Testis (tissue), 5 donors: ENCODE measurements at regions of chr18 and their contacts with region 1.

Region 1: DNA sequence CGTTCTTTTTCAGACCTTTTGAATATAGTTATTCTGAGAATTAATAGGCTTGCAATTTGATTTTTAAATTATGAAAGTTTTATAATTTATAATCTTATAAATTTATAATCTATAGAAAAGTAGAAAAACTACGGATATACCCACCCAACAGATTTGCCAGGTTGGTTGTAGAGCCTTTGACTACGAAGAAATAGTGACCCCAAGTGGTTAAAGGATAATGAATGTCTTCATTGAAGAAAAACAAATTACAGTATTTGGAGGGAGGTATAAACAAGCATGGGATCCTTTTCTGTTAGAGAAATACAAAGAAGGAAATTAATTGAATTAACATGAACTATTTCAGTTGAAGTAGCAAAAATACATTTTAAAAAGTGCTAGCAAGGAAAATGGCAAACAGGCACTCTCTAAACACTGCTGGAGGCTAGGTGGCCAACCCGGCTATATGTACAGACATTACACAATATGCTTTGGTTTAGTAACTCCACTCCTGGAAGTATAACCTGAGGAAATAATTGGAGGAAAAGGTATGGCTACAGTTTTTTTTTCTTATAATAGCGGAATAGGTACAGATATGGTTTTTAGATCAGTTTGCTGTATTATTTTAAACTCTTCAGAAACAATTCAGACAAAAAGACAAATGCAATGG is 110.9 kb downstream of the MIB1 start:
- DNase-seq: no peak
- H3K4me3 ChIP-seq: no peak overlapping the region
- H3K27ac ChIP-seq: no peak overlapping the region
- H3K4me1 ChIP-seq: no peaks in the 10 kb centered on the region
- H3K27me3 ChIP-seq: no peaks in the 10 kb centered on the region
- CTCF ChIP-seq: peak in 1 of 3 experiments; percentile 29
- POLR2A ChIP-seq: no peak

Region 2: GRCh38 chr18:21489919-21490495 is 361.4 kb before region 1 on chr18:
- intact Hi-C with region 1: loop called (anchors 10 kb)
- DNase-seq: no peak
- H3K4me3 ChIP-seq: no peak overlapping the region
- H3K27ac ChIP-seq: no peak overlapping the region
- H3K4me1 ChIP-seq: no peaks in the 10 kb centered on the region
- H3K27me3 ChIP-seq: no peaks in the 10 kb centered on the region
- CTCF ChIP-seq: no peak
- POLR2A ChIP-seq: no peak

Region 3: DNA sequence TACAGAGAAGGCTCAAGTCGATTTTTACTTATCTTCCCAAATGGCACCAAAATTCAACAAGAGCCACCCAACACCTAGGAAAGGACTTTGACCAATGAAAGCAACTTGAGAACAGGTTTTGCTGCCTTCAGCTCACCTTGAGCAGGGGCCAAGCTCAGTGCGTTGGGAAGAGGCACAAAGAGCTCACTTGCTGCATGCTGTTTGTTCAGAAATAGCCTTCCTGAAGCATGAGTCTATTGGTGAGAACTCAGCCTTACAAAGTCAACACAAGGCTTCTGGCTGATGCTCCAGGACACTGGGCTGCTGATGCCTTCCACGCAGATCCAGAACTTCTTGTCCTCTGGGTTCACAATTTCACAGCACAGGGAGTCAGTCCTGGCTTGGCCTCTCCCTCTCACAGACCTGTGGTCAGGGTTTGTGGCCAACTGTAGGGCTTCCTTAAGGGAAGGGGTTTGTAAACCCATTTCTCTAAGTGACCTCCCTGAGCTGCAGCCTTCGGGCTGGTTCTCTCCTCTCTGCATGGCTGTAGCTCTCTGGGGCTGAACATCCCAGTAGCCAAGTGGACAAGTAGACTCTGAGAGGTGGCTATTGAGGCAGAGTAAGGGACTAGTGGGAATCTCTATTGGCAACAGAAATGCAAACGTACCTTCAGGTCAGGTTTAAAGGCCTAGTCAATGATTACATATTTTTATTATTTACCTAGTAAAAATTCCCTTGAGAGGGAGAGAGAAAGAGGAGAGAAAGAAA is 193.2 kb after region 1 on chr18:
- intact Hi-C with region 1: no loop called
- DNase-seq: no peak
- H3K4me3 ChIP-seq: no peak overlapping the region
- H3K27ac ChIP-seq: no peak overlapping the region
- H3K4me1 ChIP-seq: no peaks in the 10 kb centered on the region
- H3K27me3 ChIP-seq: no peaks in the 10 kb centered on the region
- CTCF ChIP-seq: no peak
- POLR2A ChIP-seq: no peak